ENCODE measurements at regions of chr22 and their contacts with region 1.

Region 1: GRCh38 chr22:28800308-28801077 is at the start of gene XBP1:
- DNase-seq: peak; percentile 89
- H3K4me3 ChIP-seq: peak within 1 kb of the TSS; percentile 72
- H3K27ac ChIP-seq: no peak within 1 kb of the TSS
- H3K4me1 ChIP-seq: peaks cover 39% of the 10 kb centered on the region
- CTCF ChIP-seq: no peak
- total RNA-seq, gene XBP1: 35.2 and 35.8 TPM in 2 replicates

Region 2: DNA sequence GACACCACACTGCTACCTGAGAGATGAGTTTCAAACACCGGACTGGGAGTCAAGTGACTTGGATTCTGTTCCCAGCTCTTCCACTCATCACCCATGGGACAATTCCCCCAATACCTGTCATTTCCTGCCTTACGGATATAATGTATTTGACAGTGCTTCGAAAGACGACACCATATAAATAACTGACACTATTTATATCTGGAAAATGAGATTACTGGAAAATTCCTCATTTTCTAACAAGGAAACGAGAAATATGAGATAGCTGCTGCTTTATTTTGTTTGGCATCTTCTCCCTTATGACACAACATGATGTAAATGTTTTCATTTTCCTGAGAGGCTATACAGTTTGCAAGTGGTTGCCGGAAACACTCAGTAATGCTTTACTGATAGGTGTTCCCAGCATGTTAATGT is 50.0 kb before region 1 on chr22:
- CTCF ChIA-PET with region 1: no interaction called
- POLR2A ChIA-PET with region 1: no interaction called
- intact Hi-C with region 1: no loop called
- DNase-seq: no peak
- H3K4me3 ChIP-seq: no peak overlapping the region
- H3K27ac ChIP-seq: no peak overlapping the region
- H3K4me1 ChIP-seq: no peaks in the 10 kb centered on the region
- CTCF ChIP-seq: no peak

Region 3: DNA sequence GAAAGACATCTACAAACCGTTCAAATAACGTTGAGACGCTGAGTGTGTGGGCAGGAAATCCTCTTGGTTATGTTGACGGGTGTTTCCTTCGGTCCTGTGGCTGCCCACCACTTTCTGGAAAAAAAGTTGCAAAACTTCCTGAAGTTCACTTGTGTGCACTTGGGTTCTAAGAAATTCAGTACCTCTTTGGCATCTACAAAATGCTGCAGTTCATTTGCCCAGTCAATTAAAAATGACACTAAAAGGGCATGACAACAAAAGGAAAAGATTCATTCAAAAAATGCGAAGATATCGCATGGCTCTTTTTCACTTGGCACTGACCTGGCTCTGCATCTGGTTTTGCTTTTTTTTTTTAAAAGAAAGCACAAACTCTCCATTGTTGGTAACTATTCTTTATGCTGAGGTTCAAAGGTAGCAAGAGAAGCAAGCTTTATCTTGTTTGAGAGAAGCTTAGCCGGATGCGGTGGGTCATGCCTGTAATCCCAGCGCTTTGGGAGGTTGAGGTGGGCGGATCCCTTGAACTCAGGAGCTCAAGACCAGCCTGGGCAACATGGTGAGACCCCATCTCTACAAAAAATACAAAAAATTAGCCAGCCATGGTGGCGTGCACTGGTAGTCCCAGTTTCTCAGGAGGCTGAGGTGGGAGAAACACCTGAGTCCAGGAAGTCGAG is 10.5 kb after region 1 on chr22:
- CTCF ChIA-PET with region 1: interaction called, 4 read pairs
- POLR2A ChIA-PET with region 1: interaction called, 15 read pairs
- intact Hi-C with region 1: no loop called
- DNase-seq: no peak
- H3K4me3 ChIP-seq: no peak overlapping the region
- H3K27ac ChIP-seq: no peak overlapping the region
- H3K4me1 ChIP-seq: peaks cover 15% of the 10 kb centered on the region
- CTCF ChIP-seq: no peak

Region 4: GRCh38 chr22:28817919-28818909 is 17.7 kb after region 1 on chr22:
- CTCF ChIA-PET with region 1: interaction called, 4 read pairs
- POLR2A ChIA-PET with region 1: interaction called, 85 read pairs
- intact Hi-C with region 1: loop called (anchors 1 kb)
- DNase-seq: peak; percentile 46
- H3K4me3 ChIP-seq: no peak overlapping the region
- H3K27ac ChIP-seq: peak overlapping the region; percentile 7
- H3K4me1 ChIP-seq: peaks cover 46% of the 10 kb centered on the region
- CTCF ChIP-seq: no peak

Measured in OCI-LY7 (cell line).